Cardiac septum (tissue), 1 donor: ENCODE measurements at regions of chr9 and their contacts with region 1.

Region 1: DNA sequence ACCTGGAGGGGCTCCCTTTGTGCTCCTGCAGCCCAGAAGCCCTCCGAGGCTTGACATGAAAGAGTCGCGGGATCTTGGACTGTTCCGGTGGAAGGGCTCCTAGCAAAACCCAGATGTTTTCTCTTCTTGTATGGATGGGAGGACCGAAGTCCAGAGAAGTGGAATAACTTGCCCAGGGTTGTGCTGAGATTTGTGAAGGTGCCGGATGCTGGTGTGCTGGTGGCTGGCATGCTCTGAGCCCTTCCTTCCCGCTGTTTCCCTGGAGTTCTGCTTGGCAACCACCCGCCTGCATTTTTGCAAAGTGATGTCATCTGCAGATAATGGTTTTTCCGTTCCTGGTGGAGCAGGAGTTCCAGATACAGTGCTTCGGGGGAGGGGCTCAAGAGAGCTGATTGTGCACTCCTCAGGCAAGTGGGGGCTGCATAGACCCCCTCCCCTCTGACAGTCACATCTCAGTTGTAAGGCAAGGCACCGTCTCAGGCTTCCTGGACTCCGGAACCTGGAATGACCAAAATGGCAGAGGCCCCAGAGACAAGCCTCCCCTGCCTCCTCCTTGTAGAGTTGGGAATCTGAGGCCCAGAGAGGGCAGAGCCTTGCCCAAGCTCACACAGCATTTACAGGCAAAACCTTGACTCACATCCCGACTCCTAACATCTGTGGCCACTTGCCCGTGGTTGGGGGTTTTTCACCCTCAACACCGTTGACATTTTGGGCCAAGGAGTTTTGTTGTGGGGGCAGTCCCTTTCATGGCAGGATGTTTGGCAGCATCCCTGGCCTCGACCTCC is 157.0 kb downstream of the RGS3 start:
- DNase-seq: no peak

Region 2: GRCh38 chr9:113609562-113610318 is 10.8 kb before region 1 on chr9:
- intact Hi-C with region 1: loop called (anchors 1 kb)
- DNase-seq: peak; percentile 91

Region 3: DNA sequence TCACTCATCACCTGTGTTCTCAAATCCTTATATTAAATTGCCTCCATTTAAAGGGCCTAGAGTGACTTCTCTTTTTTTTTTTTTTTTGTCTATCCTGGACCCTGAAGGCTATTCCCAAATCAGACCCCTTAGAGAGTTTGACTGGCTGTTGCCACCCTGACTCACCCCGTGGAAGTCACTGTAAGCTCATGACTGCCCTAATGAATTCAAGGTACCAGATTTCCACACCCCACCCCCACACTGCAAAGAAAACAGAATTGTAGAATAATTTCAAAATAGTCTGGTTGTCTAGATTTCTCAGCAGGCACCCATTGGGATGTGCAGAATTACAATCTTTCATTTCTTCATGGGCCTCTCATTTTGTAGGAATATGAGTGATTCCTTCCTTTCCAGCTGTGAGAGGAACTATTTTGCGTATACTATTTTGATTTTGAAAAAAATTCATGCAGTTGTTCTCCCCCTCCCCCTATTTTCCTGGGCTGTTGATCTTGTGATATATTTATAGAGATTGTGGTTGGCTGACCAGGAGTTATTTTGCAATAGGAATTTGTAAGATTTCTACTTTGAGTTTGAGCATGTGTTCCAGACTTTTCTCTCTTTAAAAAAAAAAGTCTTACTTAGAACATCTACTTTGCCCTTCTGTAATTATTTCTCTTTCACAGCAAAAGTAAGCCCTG is 334.6 kb after region 1 on chr9:
- intact Hi-C with region 1: no loop called
- DNase-seq: no peak